ENCODE measurements at regions of chr17 and their contacts with region 1.

Region 1: GRCh38 chr17:77942112-77942988 is 16.2 kb upstream of the TNRC6C start:
- DNase-seq: peak in 1 of 2 donors; percentile 18
- ATAC-seq: peak in 6 of 8 donors; percentile 12 to 81 (median 49)
- H3K4me3 ChIP-seq: no peak overlapping the region
- H3K27ac ChIP-seq: no peak overlapping the region
- H3K4me1 ChIP-seq: peaks cover 0 to 6% (median 0%) of the 10 kb centered on the region in 9 donors
- H3K27me3 ChIP-seq: peaks cover 0 to 12% (median 0%) of the 10 kb centered on the region in 7 donors
- CTCF ChIP-seq: no peak

Region 2: DNA sequence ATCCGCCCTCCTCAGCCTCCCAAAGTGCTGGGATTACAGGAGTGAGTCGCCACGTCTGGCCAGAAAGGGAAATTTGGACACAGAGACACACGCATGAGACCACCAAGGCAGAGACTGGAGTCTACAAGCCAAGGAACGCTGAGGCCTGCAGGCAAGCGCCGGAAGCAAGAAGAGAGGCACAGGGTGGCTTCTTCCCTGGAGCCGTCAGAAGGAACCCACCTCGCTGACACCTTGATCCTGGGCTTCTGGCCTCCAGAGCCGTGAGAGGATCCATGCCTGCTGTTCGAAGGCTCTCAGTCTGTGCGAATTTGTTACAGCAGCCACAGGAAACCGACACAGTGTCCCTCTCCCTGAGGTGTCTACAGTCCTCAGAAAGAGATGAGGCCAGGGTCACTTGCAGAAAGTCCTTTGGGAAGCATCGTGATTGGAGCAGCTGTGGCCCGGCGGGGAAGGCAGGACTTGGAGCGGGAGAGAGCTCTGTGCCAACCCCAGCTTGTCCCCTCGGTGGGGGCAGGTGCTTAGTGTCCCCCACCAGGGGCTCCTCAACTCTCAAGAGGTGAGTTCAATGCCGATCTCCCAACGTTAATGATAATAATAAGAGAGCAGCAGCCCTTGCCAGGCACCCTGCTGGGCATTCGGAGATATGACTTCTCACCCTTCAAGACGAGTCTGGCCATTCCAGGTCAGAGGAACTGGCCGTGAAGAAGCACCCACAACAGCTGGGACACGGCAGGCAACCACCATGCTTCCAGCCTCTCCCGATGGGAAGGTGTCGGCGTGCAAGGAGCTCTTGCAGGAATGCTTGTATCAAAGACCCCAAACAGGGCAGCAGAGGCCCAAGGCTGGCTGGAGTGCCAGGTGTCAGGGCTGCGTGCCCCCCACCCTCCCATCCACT is 52.2 kb before region 1 on chr17:
- intact Hi-C with region 1: no loop called
- DNase-seq: peak in 1 of 2 donors; percentile 7
- ATAC-seq: no peak
- H3K4me3 ChIP-seq: no peak overlapping the region
- H3K27ac ChIP-seq: no peak overlapping the region
- H3K4me1 ChIP-seq: peaks cover 0 to 31% (median 6%) of the 10 kb centered on the region in 9 donors
- H3K27me3 ChIP-seq: peaks cover 0 to 11% (median 0%) of the 10 kb centered on the region in 7 donors
- CTCF ChIP-seq: no peak

Region 3: GRCh38 chr17:77901481-77901880 is 40.9 kb before region 1 on chr17:
- intact Hi-C with region 1: loop called in 1 of 10 experiments (anchors 1 kb)
- DNase-seq: no peak
- ATAC-seq: no peak
- H3K4me3 ChIP-seq: no peak overlapping the region
- H3K27ac ChIP-seq: no peak overlapping the region
- H3K4me1 ChIP-seq: no peaks in the 10 kb centered on the region
- H3K27me3 ChIP-seq: peaks cover 0 to 29% (median 3%) of the 10 kb centered on the region in 7 donors
- CTCF ChIP-seq: no peak

Region 4: GRCh38 chr17:77999413-78000173 is 57.2 kb after region 1 on chr17:
- intact Hi-C with region 1: no loop called
- DNase-seq: no peak
- ATAC-seq: no peak
- H3K4me3 ChIP-seq: no peak overlapping the region
- H3K27ac ChIP-seq: peak overlapping the region in 3 of 10 donors; percentile 9 to 13 (median 11)
- H3K4me1 ChIP-seq: peaks cover 8 to 81% (median 46%) of the 10 kb centered on the region in 9 donors
- H3K27me3 ChIP-seq: no peaks in the 10 kb centered on the region
- CTCF ChIP-seq: no peak

Measured in heart right ventricle (tissue), 16 donors.